Right ventricle myocardium inferior (tissue), 1 donor: ENCODE measurements at regions of chr20 and their contacts with region 1.

Region 1: DNA sequence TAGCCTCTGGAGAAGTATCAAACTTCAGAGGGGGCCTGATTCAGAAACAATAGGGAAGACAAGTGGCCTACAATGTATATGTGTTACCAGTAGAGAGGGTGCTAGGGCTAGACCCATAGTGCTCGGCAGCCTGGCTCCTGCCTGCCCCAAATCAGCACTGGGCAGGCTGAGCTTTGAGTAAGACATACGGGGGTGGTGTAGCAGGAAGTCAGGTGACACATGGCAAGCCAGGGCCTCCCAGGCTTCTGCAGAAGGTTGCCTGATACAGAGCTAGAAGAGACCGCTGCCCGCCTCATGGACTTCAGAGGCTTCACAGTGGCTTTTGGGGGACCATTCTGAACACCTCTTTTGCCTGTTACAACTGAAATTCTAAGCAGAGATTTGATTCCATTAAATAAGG is 43.4 kb downstream of the RALY start:
- DNase-seq: no peak
- ATAC-seq: no peak

Region 2: GRCh38 chr20:33992923-33993575 is 44.1 kb before region 1 on chr20:
- intact Hi-C with region 1: loop called (anchors 1 kb)
- DNase-seq: peak; percentile 99
- ATAC-seq: peak; percentile 95